Naive thymus-derived CD4-positive, alpha-beta T cell (primary cell): ENCODE measurements at regions of chr14 and their contacts with region 1.

Region 1: DNA sequence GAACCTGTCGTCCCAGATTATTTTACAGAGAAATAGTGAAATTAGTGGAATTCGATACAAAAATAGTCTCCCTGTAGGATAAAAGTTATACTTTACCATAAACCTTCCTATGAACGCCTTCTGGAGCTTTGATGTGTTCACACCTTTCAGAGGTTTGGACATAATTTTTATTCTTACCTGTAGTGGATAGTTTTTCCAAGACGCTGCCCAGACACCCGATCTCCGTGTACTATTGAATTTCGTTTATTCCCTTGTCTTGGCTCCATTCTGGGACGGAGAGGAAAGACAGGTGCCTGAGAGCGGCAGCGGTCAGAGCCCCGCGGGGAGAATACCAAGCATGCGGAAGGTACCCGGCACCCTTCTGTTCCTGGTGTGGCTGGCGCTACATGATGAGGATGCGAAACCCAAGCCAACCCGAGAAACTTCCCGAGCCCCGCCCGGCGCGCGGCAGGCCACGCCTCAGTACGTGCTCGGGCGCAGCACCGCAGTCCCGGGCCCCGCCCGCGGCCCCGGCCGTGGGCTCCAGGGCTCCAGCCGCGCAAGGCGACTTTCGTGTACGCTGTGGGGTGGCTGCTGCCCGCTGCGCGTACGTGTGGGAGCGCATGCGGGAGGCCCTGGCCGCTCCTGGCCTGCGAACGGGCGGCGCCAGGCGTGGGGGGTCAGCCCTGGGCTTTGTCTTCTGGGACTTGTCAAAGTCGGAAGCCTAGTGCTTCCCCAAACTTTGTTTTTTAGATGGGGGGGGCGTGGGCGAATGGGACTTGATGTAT is 11.3 kb upstream of the SNAPC1 start:
- DNase-seq: peak; percentile 53 to 89 (median 66)
- ATAC-seq: peak; percentile 92
- H3K4me3 ChIP-seq: peak overlapping the region; percentile 55
- H3K4me3 Mint-ChIP-seq: peak overlapping the region; percentile 75 to 94 (median 85)
- H3K27ac ChIP-seq: peak overlapping the region; percentile 75
- H3K27ac Mint-ChIP-seq: peak overlapping the region; percentile 26 to 88 (median 70)
- H3K4me1 ChIP-seq: no peaks in the 10 kb centered on the region
- H3K4me1 Mint-ChIP-seq: peaks cover 4 to 63% (median 11%) of the 10 kb centered on the region in 7 donors
- H3K27me3 ChIP-seq: no peaks in the 10 kb centered on the region
- H3K27me3 Mint-ChIP-seq: peaks cover 0 to 8% (median 1%) of the 10 kb centered on the region in 5 donors

Region 2: DNA sequence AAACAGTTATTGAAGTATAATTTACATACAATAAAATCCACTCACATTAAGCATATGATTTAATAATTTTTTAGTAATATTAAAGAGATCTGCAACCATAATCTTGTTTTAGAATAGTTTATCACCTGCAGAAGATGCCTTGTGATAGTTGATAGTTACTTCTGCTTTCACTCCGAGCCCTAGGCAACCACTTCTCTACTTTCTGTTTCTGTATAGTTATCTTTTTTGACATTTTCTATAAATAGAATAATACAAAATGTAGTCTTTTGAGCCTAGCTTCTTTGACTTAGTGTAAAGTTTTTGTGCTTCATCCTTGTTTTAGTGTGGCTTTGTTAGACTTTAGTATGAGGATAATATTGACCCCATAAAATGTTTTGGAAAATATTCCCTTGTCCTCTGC is 905.4 kb before region 1 on chr14:
- CTCF ChIA-PET with region 1: no interaction called
- POLR2A ChIA-PET with region 1: no interaction called
- intact Hi-C with region 1: no loop called
- DNase-seq: no peak
- ATAC-seq: no peak
- H3K4me3 ChIP-seq: no peak overlapping the region
- H3K4me3 Mint-ChIP-seq: no peak overlapping the region
- H3K27ac ChIP-seq: no peak overlapping the region
- H3K27ac Mint-ChIP-seq: no peak overlapping the region
- H3K4me1 ChIP-seq: no peaks in the 10 kb centered on the region
- H3K4me1 Mint-ChIP-seq: peaks cover 0 to 7% (median 3%) of the 10 kb centered on the region in 7 donors
- H3K27me3 ChIP-seq: peaks cover 0 to 4% of the 10 kb centered on the region in 2 donors
- H3K27me3 Mint-ChIP-seq: no peaks in the 10 kb centered on the region

Region 3: GRCh38 chr14:61736751-61737150 is 14.1 kb before region 1 on chr14:
- CTCF ChIA-PET with region 1: interaction called, 4 read pairs
- POLR2A ChIA-PET with region 1: interaction called, 3 read pairs
- intact Hi-C with region 1: loop called in 1 of 2 experiments (anchors 2 kb)
- DNase-seq: no peak
- ATAC-seq: no peak
- H3K4me3 ChIP-seq: no peak overlapping the region
- H3K4me3 Mint-ChIP-seq: no peak overlapping the region
- H3K27ac ChIP-seq: no peak overlapping the region
- H3K27ac Mint-ChIP-seq: peak overlapping the region in 3 of 9 donors; percentile 46 to 59 (median 56)
- H3K4me1 ChIP-seq: no peaks in the 10 kb centered on the region
- H3K4me1 Mint-ChIP-seq: peaks cover 0 to 50% (median 4%) of the 10 kb centered on the region in 7 donors
- H3K27me3 ChIP-seq: no peaks in the 10 kb centered on the region
- H3K27me3 Mint-ChIP-seq: no peaks in the 10 kb centered on the region

Region 4: DNA sequence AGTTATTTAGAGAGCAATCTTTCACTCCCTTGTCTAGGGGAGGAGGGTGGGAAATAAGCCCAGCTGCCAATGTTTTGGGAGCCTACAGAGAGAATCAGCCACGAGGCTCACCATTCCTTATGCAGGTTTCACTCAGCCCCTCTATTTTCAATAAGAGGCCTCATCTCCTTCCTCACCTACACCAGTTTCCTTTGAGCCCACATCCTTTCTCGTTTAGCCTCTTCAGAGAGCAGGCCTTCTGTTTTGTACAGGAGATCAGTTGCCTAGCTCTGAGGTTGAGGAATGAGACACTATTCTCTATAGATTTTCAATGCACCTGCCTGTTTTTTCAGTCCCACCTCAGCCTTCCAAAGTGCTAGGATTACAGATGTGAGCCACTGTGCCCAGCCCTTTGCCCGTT is 29.2 kb after region 1 on chr14:
- CTCF ChIA-PET with region 1: no interaction called
- POLR2A ChIA-PET with region 1: interaction called, 3 read pairs
- intact Hi-C with region 1: loop called in 1 of 2 experiments (anchors 5 kb)
- DNase-seq: peak in 7 of 9 donors; percentile 20 to 62 (median 52)
- ATAC-seq: peak; percentile 46
- H3K4me3 ChIP-seq: no peak overlapping the region
- H3K4me3 Mint-ChIP-seq: peak overlapping the region; percentile 51 to 84 (median 76)
- H3K27ac ChIP-seq: peak overlapping the region; percentile 65
- H3K27ac Mint-ChIP-seq: peak overlapping the region; percentile 61 to 96 (median 92)
- H3K4me1 ChIP-seq: peaks cover 0 to 18% of the 10 kb centered on the region in 2 donors
- H3K4me1 Mint-ChIP-seq: peaks cover 14 to 50% (median 45%) of the 10 kb centered on the region in 7 donors
- H3K27me3 ChIP-seq: no peaks in the 10 kb centered on the region
- H3K27me3 Mint-ChIP-seq: no peaks in the 10 kb centered on the region